Ovary (tissue), 10 donors: ENCODE measurements at regions of chr4 and their contacts with region 1.

Region 1: DNA sequence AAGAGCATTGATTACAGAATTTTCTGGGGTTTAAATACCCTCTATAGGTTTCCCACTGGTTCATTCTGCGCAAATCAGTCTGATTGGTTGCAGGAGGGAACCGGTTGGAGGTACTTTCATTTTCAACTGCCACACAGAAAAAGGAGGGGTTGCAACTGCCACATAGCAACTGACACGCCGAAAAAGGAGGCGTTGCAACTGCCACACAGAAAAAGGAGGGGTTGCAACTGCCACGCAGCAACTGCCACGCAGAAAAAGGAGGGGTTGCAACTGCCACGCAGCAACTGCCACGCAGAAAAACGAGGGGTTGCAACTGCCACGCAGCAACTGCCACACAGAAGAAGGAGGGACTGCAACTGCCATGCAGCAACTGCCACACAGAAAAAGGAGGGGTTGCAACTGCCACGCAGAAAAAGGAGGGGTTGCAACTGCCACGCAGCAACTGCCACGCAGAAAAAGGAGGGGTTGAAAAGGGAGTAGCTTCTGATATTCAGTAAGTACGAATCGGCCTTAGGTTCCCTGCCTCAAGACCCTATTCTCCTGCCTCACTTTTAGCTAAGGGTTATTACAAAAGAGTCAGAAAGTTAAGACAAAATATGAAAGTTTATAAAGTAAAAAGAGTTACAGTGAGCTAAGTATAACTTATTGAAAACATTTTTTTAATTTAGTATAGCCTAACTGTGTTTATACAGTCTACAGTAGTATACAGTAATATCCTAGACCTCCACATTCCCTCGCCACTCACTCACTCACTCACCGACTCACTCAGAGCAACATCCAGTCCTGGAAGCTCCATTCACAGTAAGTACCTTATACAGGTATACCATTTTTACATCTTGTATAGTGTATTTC is 431.8 kb downstream of the KCTD8 start:
- DNase-seq: no peak
- H3K4me3 ChIP-seq: no peak overlapping the region
- H3K27ac ChIP-seq: no peak overlapping the region
- H3K4me1 ChIP-seq: no peaks in the 10 kb centered on the region
- H3K27me3 ChIP-seq: no peaks in the 10 kb centered on the region
- CTCF ChIP-seq: no peak
- EP300 ChIP-seq: no peak
- POLR2A ChIP-seq: no peak

Region 2: DNA sequence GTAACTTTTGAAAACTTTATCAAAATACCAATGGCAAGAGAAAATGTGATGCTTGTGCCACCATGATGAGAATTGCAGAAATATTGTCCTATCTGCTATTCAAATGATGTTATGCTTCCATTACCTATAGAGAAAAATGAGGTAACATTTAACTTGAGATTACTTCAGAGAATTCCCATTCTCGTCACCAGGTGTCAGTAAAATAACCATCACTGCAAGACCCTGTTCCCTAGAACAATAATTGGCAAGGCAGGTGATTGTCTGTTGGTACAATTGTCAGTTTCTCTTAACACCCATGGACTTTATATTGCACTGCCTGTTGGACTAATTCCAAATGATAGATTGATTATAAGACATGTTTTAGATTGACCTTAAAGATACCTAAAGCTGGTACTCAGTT is 1927.2 kb after region 1 on chr4:
- intact Hi-C with region 1: loop called in 1 of 4 experiments (anchors 10 kb)
- DNase-seq: no peak
- H3K4me3 ChIP-seq: no peak overlapping the region
- H3K27ac ChIP-seq: no peak overlapping the region
- H3K4me1 ChIP-seq: no peaks in the 10 kb centered on the region
- H3K27me3 ChIP-seq: no peaks in the 10 kb centered on the region
- CTCF ChIP-seq: no peak
- EP300 ChIP-seq: no peak
- POLR2A ChIP-seq: no peak